Prostate gland (tissue), 2 donors: ENCODE measurements at regions of chr2 and their contacts with region 1.

Region 1: GRCh38 chr2:173965329-173966025 is at the start of gene SP3:
- DNase-seq: peak; percentile 96
- H3K4me3 ChIP-seq: peak within 1 kb of the TSS; percentile 99 to 100
- H3K27ac ChIP-seq: peak within 1 kb of the TSS; percentile 100
- H3K4me1 ChIP-seq: peaks cover 5% of the 10 kb centered on the region
- H3K27me3 ChIP-seq: no peaks in the 10 kb centered on the region
- CTCF ChIP-seq: peak in 1 of 4 experiments; percentile 4
- POLR2A ChIP-seq: peak; percentile 93
- total RNA-seq, gene SP3: 145 to 166 TPM

Region 2: GRCh38 chr2:174012347-174013314 is 47.2 kb after region 1 on chr2:
- intact Hi-C with region 1: loop called (anchors 5 kb)
- DNase-seq: peak; percentile 62
- H3K4me3 ChIP-seq: peak overlapping the region; percentile 44 to 54
- H3K27ac ChIP-seq: peak overlapping the region; percentile 85 to 89
- H3K4me1 ChIP-seq: no peaks in the 10 kb centered on the region
- H3K27me3 ChIP-seq: no peaks in the 10 kb centered on the region
- CTCF ChIP-seq: no peak
- POLR2A ChIP-seq: no peak

Region 3: DNA sequence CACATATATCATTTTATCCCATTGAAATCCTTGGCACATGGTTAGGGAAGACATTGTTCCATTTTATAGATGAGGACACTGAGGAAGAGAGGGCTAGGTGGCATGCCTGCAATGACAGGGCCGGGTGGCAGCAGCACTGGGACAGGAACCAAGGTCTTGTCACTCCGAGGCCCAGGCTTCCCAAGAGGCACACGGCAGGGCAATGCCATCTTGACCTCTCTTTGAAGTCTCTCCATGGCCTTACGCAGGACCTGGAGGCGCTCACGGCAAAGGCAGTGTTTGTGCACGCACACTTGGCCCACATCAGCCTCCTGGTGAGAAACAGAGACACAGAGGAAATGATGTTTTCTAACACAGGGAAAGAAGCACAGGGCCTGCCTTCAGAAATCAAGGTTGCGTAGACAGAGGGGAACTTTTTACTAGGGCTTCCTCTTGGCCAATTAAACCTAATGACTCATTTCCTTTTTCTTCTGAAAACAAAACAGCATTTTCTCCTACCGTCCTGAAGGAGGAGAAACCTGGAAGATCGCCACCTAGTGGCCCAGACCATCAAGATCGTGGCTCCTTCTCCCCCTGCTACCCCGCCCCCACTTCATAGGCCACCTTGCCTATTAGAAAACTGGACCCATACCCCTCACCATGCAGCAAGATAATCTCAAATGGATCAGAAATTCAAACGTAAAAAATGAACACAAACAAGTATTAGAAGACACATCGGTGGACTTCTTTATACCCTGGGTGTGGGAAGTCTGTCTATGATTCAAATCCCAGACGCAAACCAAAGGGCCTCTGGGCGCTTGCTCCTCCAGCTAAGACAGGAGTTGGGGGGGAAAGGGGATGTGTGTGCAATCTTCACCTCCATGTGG is 74.3 kb after region 1 on chr2:
- intact Hi-C with region 1: loop called (anchors 2 kb)
- DNase-seq: peak; percentile 85
- H3K4me3 ChIP-seq: no peak overlapping the region
- H3K27ac ChIP-seq: peak overlapping the region; percentile 45 to 73
- H3K4me1 ChIP-seq: no peaks in the 10 kb centered on the region
- H3K27me3 ChIP-seq: no peaks in the 10 kb centered on the region
- CTCF ChIP-seq: peak; percentile 67 to 91 (median 86)
- POLR2A ChIP-seq: peak; percentile 14

Region 4: GRCh38 chr2:174341286-174341994 is 376.0 kb after region 1 on chr2:
- intact Hi-C with region 1: loop called (anchors 5 kb)
- DNase-seq: peak; percentile 82
- H3K4me3 ChIP-seq: no peak overlapping the region
- H3K27ac ChIP-seq: no peak overlapping the region
- H3K4me1 ChIP-seq: no peaks in the 10 kb centered on the region
- H3K27me3 ChIP-seq: peaks cover 57% of the 10 kb centered on the region
- CTCF ChIP-seq: peak; percentile 82 to 94 (median 88)
- POLR2A ChIP-seq: peak; percentile 12

Region 5: GRCh38 chr2:174778085-174778981 is 812.9 kb after region 1 on chr2:
- intact Hi-C with region 1: no loop called
- DNase-seq: no peak
- H3K4me3 ChIP-seq: no peak overlapping the region
- H3K27ac ChIP-seq: no peak overlapping the region
- H3K4me1 ChIP-seq: no peaks in the 10 kb centered on the region
- H3K27me3 ChIP-seq: no peaks in the 10 kb centered on the region
- CTCF ChIP-seq: no peak
- POLR2A ChIP-seq: no peak